ENCODE measurements at regions of chr19 and their contacts with region 1.

Region 1: DNA sequence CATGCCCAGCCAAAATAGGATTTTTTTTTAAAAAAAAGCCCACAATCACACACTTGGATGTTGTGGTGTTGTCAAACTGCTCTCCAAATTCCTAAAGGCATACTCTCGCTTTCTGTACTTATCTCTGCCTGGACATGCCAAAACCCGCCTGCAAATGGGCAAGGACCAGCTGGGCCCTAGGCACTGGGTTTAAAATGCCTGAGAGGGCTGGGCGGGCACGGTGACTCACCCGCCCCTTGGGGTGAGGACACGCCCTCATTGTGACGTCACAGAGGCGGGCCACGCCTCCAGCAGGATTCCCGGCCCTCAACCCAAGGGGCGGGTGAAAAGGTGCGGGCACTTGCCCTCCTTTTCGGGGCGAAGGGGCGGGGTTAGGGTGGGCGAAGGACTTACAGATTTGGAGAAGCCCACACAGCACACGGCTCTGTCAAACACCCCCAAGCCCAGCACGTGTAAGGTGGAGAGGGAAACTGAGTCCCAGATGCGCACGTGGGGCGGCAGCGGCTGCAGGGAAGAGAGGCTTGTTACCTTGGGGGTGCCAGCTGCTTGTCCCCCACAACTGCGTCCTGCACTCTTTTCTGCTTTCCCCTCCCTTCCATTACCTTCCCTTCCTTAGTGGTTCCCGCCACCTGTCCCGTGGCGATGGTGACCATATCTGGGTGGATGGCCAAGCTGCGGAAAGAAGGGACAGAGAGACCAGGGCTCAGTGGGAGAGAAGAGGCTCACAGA is 6.6 kb downstream of the EML2 start:
- DNase-seq: peak; percentile 79
- ATAC-seq: peak; percentile 54
- H3K4me3 Mint-ChIP-seq: no peak overlapping the region
- H3K27ac Mint-ChIP-seq: peak overlapping the region; percentile 60
- H3K4me1 Mint-ChIP-seq: peaks cover 19% of the 10 kb centered on the region
- H3K27me3 Mint-ChIP-seq: no peaks in the 10 kb centered on the region

Region 2: DNA sequence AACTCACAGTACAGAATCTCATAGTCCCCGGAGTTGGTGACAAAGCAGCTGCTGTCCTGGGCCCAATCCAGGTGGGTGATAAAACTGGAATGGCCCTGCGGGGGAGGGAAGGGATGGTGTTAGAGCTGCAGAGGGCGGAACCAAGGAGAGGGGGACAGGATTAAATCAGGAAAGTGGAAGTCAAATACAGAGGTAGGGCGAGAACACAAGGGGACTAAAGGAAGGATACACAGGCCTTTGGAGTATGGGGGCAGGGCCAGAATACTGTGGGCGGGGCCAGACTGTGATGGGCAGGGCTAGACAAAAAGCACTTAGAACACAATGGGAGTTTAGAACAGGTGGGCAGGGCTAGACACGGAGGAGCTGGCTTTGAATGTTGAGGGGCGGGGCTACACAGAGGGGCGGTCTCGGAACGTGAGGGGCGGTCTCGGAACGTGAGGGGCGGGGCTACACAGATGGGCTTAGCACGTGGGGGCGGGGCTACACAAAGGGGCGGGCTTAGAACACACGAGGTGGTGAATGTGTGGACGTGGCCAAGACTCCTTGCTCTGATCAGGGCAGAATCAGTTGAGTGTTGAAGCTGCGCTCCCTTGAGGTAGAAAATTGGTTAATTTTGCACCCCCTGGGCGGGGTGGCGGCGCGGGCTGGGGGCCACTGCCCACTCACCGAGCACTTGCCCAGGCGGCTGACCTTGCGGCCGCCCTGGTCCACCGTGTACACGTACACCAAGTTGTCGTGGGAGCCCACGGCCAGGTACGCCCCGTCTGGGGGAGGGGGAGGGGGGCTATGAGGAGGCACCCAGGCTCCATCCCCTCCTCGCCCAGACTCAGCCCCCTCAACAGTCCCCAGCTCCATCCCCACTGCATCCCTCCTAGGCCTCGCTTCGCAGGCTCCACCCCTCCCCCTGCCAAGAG is 16.6 kb before region 1 on chr19:
- CTCF ChIA-PET with region 1: interaction called, 3 read pairs
- POLR2A ChIA-PET with region 1: interaction called, 6 read pairs
- intact Hi-C with region 1: loop called in 1 of 2 experiments (anchors 1 kb)
- DNase-seq: peak; percentile 95
- ATAC-seq: peak; percentile 86
- H3K4me3 Mint-ChIP-seq: no peak overlapping the region
- H3K27ac Mint-ChIP-seq: peak overlapping the region; percentile 65
- H3K4me1 Mint-ChIP-seq: peaks cover 24% of the 10 kb centered on the region
- H3K27me3 Mint-ChIP-seq: no peaks in the 10 kb centered on the region